Kidney (tissue), 22 donors: ENCODE measurements at regions of chr22 and their contacts with region 1.

Region 1: GRCh38 chr22:31970490-31971444 is 26.4 kb downstream of the YWHAH start:
- DNase-seq: peak; percentile 91 to 96 (median 94)
- H3K4me3 ChIP-seq: peak overlapping the region; percentile 52 to 59 (median 57)
- H3K27ac ChIP-seq: no peak overlapping the region
- H3K4me1 ChIP-seq: peaks cover 0 to 7% (median 0%) of the 10 kb centered on the region in 3 donors
- H3K27me3 ChIP-seq: no peaks in the 10 kb centered on the region
- CTCF ChIP-seq: peak; percentile 88

Region 2: DNA sequence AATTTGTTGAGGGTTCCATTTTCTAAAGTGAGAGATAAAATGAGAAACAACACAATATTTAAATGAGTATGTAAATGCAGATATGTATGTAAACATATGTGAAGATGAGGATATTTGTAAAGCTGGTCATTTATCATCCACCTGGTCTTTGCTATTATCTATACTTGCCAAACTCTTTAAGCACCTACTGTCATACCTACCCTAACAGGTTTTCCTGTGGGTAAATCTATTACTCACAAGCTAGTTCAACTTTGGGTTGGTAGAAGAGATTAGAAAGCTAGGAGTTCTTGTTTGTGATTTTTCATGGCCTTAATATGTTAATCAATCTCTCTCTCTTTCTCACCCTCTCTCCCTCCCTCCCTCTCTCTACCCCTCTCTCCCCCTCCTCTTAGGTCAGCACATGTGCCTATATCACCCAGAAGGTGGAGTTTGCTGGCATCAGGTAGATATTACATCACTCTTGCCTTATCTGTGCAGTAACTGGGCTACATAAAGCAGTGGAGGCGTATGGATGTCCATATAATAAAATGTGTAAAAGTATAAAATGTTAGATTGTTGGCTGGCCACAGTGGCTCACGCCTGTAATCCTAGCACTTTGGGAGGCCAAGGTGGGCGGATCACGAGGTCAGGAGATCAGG is 202.2 kb before region 1 on chr22:
- intact Hi-C with region 1: no loop called
- DNase-seq: no peak
- H3K4me3 ChIP-seq: no peak overlapping the region
- H3K27ac ChIP-seq: no peak overlapping the region
- H3K4me1 ChIP-seq: no peaks in the 10 kb centered on the region
- H3K27me3 ChIP-seq: no peaks in the 10 kb centered on the region
- CTCF ChIP-seq: no peak

Region 3: GRCh38 chr22:32080904-32081303 is 110.1 kb after region 1 on chr22:
- intact Hi-C with region 1: loop called (anchors 10 kb)
- DNase-seq: peak in 2 of 5 donors; percentile 20 to 40
- H3K4me3 ChIP-seq: no peak overlapping the region
- H3K27ac ChIP-seq: no peak overlapping the region
- H3K4me1 ChIP-seq: peaks cover 0 to 25% (median 4%) of the 10 kb centered on the region in 3 donors
- H3K27me3 ChIP-seq: no peaks in the 10 kb centered on the region
- CTCF ChIP-seq: peak; percentile 67

Region 4: DNA sequence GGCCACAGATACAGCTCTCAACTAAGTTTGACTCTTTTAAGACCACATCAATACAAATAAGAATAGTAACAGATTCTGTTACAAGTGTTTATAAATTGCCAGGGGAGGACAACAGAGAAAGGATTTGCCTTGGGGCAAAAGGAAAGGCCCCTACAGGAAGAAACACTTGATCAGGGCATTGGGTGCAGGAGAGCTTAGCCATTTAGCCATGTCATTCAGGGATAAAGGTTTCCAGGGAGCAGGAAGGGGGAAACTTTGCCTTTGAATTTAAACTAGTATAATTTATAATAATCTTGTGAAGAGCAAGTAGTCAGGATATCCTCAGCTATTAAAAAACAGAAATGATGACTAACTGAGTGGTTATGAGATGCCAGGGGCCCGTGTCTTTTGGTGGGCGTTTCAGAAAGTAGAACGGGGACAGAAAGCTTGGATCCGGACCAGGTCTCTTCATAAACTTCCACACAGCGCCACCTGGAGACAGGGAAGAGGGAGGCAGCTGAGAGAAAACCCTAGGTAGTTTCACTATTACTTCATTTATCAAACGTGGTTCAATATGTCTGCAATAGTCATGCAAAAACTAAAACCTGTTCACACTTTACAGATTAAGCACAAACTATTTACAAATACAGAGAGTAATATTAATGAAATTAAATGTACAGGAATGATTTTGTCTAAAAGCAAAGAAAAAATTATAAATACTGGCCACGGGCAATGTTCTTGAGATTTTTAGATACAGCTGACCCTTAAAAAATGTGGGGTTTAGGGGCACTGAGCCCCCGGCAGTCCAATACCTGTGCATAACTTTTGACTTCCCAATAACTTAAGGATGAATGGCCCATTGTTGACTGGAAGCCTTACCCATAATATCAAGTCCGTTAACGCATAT is 295.4 kb after region 1 on chr22:
- intact Hi-C with region 1: loop called (anchors 10 kb)
- DNase-seq: peak in 3 of 5 donors; percentile 58 to 90 (median 69)
- H3K4me3 ChIP-seq: peak overlapping the region in 1 of 3 donors; percentile 44
- H3K27ac ChIP-seq: no peak overlapping the region
- H3K4me1 ChIP-seq: no peaks in the 10 kb centered on the region
- H3K27me3 ChIP-seq: no peaks in the 10 kb centered on the region
- CTCF ChIP-seq: peak; percentile 73